CD8-positive, alpha-beta T cell (primary cell): ENCODE measurements at regions of chrX and their contacts with region 1.

Region 1: DNA sequence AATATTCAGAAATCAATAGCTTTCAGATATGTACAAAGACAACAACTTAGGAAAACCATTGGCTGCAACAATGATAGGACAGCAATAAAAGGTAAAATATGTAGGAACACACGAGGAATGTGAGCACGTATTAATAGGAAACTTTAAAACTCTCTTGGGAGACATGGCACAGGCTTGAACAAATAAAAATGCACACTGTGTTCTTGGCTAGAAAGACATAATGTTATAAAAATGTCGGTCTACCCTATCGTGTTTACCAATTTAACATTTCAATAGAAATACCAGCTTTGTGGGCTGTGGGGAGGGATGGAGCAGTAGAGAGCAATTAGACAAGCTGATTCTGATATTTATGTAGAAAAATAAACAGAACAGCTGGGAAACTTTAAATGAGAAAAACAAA is 69.0 kb upstream of the FAM9B start:
- DNase-seq: no peak
- ATAC-seq: no peak
- H3K4me3 ChIP-seq: no peak overlapping the region
- H3K4me3 Mint-ChIP-seq: no peak overlapping the region
- H3K27ac ChIP-seq: no peak overlapping the region
- H3K27ac Mint-ChIP-seq: no peak overlapping the region
- H3K4me1 ChIP-seq: no peaks in the 10 kb centered on the region
- H3K4me1 Mint-ChIP-seq: no peaks in the 10 kb centered on the region
- H3K27me3 ChIP-seq: no peaks in the 10 kb centered on the region
- H3K27me3 Mint-ChIP-seq: no peaks in the 10 kb centered on the region
- CTCF ChIP-seq: no peak

Region 2: GRCh38 chrX:9141496-9141895 is 38.5 kb after region 1 on chrX:
- CTCF ChIA-PET with region 1: no interaction called
- POLR2A ChIA-PET with region 1: no interaction called
- intact Hi-C with region 1: loop called in 1 of 2 experiments (anchors 2 kb)
- DNase-seq: no peak
- ATAC-seq: no peak
- H3K4me3 ChIP-seq: no peak overlapping the region
- H3K4me3 Mint-ChIP-seq: no peak overlapping the region
- H3K27ac ChIP-seq: no peak overlapping the region
- H3K27ac Mint-ChIP-seq: no peak overlapping the region
- H3K4me1 ChIP-seq: no peaks in the 10 kb centered on the region
- H3K4me1 Mint-ChIP-seq: no peaks in the 10 kb centered on the region
- H3K27me3 ChIP-seq: no peaks in the 10 kb centered on the region
- H3K27me3 Mint-ChIP-seq: no peaks in the 10 kb centered on the region
- CTCF ChIP-seq: no peak

Region 3: DNA sequence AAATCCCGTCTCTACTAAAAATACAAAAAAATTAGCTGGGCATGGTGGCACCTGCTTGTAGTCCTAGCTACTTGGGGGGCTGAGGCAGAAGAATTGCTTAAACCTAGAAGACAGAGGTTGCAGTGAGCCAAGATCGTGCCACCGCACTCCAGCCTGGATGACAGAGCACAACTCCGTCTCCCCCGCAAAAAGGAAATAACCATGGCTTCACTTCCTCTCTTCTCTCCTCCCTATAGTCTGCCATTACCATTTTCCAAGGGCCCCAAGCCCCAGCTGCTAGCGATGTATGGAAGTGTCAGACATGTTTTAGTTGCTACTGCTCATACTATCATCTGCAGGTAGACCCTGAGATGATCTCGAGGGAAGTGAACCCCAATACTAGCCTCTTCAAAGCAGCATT is 108.3 kb after region 1 on chrX:
- CTCF ChIA-PET with region 1: no interaction called
- POLR2A ChIA-PET with region 1: no interaction called
- intact Hi-C with region 1: loop called in 1 of 2 experiments (anchors 10 kb)
- DNase-seq: no peak
- ATAC-seq: no peak
- H3K4me3 ChIP-seq: no peak overlapping the region
- H3K4me3 Mint-ChIP-seq: no peak overlapping the region
- H3K27ac ChIP-seq: no peak overlapping the region
- H3K27ac Mint-ChIP-seq: no peak overlapping the region
- H3K4me1 ChIP-seq: no peaks in the 10 kb centered on the region
- H3K4me1 Mint-ChIP-seq: peaks cover 7% of the 10 kb centered on the region
- H3K27me3 ChIP-seq: no peaks in the 10 kb centered on the region
- H3K27me3 Mint-ChIP-seq: no peaks in the 10 kb centered on the region
- CTCF ChIP-seq: no peak